Panc1 (cell line): ENCODE measurements at regions of chr12 and their contacts with region 1.

Region 1: DNA sequence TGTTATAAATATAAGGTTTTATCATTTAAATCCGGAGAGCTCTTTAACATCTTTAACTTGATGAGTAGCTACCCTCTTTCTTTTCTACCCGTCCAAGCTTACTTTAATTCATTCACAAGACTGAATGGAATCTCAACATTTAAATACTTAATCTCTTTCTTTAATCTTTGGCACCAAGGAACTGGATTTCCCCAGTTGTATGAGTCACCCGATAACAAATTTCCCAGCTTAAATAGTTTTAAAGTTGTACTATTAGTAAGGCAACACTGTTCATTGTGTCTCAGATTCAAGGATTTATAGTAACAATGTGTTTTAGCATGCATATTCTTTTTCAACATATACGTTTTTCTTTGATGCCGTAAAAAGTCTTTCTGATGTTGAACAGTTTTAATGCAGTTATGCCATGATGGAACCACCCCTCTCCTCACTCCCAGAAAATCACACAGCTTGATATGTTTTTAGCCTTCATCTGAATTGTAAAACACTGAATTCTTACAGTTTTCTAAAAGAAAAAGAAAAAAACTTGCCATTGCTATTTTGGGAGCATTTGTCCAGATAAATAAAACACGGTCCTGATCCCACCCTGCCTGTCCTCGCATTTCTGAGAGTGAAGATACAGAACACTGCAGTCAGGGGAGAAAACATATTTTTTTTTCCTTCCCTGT is 16.0 kb upstream of the LRP6 start:
- DNase-seq: no peak
- ATAC-seq: no peak
- H3K4me3 ChIP-seq: no peak overlapping the region
- H3K27ac ChIP-seq: no peak overlapping the region
- H3K4me1 ChIP-seq: peaks cover 7% of the 10 kb centered on the region; the same call in 1 of the 2 replicates
- H3K27me3 ChIP-seq: no peaks in the 10 kb centered on the region
- CTCF ChIP-seq: no peak

Region 2: GRCh38 chr12:12294215-12295005 is 11.5 kb after region 1 on chr12:
- CTCF ChIA-PET with region 1: no interaction called
- POLR2A ChIA-PET with region 1: interaction called, 10 read pairs
- in situ Hi-C with region 1: no loop called
- intact Hi-C with region 1: no loop called
- DNase-seq: no peak
- ATAC-seq: no peak
- H3K4me3 ChIP-seq: no peak overlapping the region
- H3K27ac ChIP-seq: no peak overlapping the region
- H3K4me1 ChIP-seq: no peaks in the 10 kb centered on the region
- H3K27me3 ChIP-seq: no peaks in the 10 kb centered on the region
- CTCF ChIP-seq: no peak

Region 3: DNA sequence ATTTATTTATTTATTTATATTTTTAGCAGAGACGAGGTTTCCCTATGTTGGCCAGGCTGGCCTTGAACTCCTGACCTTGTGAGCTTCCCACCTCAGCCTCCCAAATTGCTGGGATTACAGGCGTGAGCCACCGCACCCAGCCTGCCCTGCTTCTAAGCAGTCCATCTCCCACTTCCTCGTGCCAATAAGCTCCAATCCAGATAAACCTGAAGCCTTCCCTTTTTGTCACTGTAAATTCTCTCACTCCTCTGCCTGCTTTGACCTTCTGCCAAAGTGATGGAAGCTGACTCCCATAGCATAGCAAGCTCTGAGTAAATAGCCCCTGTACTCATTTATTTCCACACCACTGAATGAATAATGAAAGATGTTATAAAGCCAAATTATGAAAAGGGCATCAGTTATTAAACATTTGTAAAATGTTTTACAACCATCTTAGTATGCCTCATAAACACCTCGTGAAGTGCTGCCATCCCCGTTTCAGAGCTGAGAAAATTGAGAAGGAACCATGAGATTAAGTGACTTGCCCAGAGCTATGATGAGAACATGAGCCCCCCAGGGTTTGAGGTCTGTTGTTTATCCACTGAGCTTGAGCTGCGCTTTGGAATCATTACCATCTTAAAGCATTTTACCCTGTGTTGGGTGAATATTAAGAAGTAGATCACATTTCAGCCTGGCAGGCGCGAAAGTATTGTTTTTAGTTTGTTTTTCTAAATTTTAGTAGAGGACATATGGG is 36.7 kb after region 1 on chr12:
- CTCF ChIA-PET with region 1: no interaction called
- POLR2A ChIA-PET with region 1: no interaction called
- in situ Hi-C with region 1: no loop called
- intact Hi-C with region 1: no loop called
- DNase-seq: no peak
- ATAC-seq: no peak
- H3K4me3 ChIP-seq: no peak overlapping the region
- H3K27ac ChIP-seq: no peak overlapping the region
- H3K4me1 ChIP-seq: no peaks in the 10 kb centered on the region
- H3K27me3 ChIP-seq: no peaks in the 10 kb centered on the region
- CTCF ChIP-seq: no peak